Right cardiac atrium (tissue), 5 donors: ENCODE measurements at regions of chr18 and their contacts with region 1.

Region 1: DNA sequence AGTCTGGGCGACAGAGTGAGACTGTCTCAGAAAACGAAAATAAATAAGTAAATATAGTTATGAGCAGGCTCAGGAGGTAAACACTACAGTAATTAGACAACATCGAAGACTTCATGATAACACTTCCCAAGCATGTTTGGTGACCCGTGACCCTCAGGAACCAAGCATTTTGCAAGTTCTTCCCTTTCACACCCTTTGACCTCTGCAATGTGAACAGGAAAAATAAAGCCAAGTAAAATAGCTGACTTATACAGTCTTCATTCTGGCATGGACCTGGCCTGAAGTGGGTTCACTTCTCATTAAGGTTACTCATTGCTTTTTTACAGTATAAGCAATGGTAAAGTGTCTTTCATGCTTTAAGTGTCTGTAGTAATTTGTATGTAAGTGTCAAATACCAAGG is 15.3 kb upstream of the TGIF1 start:
- DNase-seq: no peak
- ATAC-seq: no peak
- H3K4me3 ChIP-seq: no peak overlapping the region
- H3K27ac ChIP-seq: no peak overlapping the region
- H3K4me1 ChIP-seq: no peaks in the 10 kb centered on the region
- H3K27me3 ChIP-seq: no peaks in the 10 kb centered on the region

Region 2: DNA sequence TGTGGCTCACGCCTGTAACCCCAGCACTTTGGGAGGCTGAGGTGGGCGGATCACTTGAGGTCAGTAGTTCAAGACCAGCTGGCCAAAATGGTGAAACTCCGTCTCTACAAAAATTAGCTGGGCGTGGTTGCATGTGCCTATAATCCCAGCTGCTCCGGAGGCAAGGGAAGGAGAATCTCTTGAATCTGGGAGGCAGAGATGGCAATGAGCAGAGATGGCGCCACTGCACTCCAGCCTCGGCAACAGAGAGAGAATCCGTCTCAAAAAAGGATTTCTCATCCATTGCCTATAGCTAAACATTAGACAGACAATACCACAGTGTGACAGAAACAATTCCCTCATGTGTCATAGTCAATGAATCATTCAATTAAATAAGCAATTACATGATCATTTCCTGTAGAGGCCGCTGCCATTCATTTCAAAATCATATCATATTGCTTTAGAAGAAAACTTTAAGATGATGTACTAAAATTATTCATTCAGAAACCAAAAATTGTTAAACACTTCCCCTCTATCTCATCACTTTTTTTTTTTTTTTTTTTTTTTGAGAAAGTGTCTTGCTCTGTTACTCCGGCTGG is 54.2 kb before region 1 on chr18:
- intact Hi-C with region 1: loop called in 1 of 4 experiments (anchors 10 kb)
- DNase-seq: no peak
- ATAC-seq: no peak
- H3K4me3 ChIP-seq: no peak overlapping the region
- H3K27ac ChIP-seq: no peak overlapping the region
- H3K4me1 ChIP-seq: no peaks in the 10 kb centered on the region
- H3K27me3 ChIP-seq: no peaks in the 10 kb centered on the region

Region 3: GRCh38 chr18:3498698-3499471 is 64.2 kb after region 1 on chr18:
- intact Hi-C with region 1: loop called in 1 of 4 experiments (anchors 10 kb)
- DNase-seq: peak; percentile 26 to 79 (median 66)
- ATAC-seq: peak; percentile 75 to 80
- H3K4me3 ChIP-seq: peak overlapping the region; percentile 62
- H3K27ac ChIP-seq: no peak overlapping the region
- H3K4me1 ChIP-seq: no peaks in the 10 kb centered on the region
- H3K27me3 ChIP-seq: no peaks in the 10 kb centered on the region